ENCODE measurements at regions of chr11 and their contacts with region 1.

Region 1: GRCh38 chr11:117143871-117144476 is at the start of gene PAFAH1B2:
- DNase-seq: peak; percentile 96 to 97
- ATAC-seq: peak; percentile 96 to 98 (median 97)
- H3K4me3 ChIP-seq: peak within 1 kb of the TSS; percentile 71 to 97 (median 84)
- H3K27ac ChIP-seq: peak within 1 kb of the TSS; percentile 86 to 97 (median 94)
- H3K4me1 ChIP-seq: peaks cover 0 to 47% (median 39%) of the 10 kb centered on the region in 9 donors
- H3K27me3 ChIP-seq: no peaks in the 10 kb centered on the region
- CTCF ChIP-seq: no peak
- total RNA-seq, gene PAFAH1B2: 48.8 to 71.5 (median 64.2) TPM

Region 2: DNA sequence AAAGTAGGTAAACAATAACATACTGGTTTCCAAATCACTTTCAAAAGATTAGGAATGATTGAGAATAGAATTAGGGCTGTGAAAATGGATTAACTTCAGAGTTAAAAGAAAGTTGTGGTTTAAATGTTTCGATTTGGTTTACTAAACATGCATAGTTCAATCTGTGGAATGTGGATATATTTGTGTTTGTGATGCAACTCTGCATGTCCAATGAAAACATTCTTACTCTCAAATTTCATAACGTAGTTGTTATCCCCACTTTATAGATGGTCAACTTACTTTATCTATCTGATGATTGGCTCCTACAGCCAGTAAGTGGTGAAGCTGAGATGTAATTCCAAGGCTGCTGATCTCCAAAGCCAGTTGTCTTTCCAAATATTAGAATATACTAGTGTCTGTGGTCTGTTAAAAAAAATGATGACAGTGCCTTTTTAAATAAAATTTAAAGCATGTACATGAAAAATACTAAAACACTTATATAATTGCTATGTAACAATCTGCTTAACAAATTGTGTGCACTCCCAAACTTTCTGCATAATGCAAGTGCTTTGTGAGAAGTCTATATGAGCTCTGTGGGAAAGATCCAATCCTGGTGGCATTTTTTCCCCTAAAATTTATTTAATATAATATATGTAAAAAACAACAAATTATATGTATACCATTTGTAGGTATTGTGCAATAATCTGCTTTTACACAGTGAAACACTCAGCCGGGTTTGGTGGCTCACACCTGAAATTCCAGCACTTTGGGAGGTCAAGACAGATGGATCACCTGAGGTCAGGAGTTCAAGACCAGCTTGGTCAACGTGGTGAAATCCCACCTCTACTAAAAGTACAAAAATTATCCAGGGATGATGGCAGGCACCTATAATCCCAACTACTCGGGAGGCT is 36.0 kb before region 1 on chr11:
- intact Hi-C with region 1: loop called in 1 of 10 experiments (anchors 5 kb)
- DNase-seq: no peak
- ATAC-seq: no peak
- H3K4me3 ChIP-seq: no peak overlapping the region
- H3K27ac ChIP-seq: peak overlapping the region in 3 of 10 donors; percentile 52 to 64 (median 56)
- H3K4me1 ChIP-seq: peaks cover 0 to 6% (median 0%) of the 10 kb centered on the region in 9 donors
- H3K27me3 ChIP-seq: no peaks in the 10 kb centered on the region
- CTCF ChIP-seq: peak in 1 of 9 donors; percentile 2

Region 3: DNA sequence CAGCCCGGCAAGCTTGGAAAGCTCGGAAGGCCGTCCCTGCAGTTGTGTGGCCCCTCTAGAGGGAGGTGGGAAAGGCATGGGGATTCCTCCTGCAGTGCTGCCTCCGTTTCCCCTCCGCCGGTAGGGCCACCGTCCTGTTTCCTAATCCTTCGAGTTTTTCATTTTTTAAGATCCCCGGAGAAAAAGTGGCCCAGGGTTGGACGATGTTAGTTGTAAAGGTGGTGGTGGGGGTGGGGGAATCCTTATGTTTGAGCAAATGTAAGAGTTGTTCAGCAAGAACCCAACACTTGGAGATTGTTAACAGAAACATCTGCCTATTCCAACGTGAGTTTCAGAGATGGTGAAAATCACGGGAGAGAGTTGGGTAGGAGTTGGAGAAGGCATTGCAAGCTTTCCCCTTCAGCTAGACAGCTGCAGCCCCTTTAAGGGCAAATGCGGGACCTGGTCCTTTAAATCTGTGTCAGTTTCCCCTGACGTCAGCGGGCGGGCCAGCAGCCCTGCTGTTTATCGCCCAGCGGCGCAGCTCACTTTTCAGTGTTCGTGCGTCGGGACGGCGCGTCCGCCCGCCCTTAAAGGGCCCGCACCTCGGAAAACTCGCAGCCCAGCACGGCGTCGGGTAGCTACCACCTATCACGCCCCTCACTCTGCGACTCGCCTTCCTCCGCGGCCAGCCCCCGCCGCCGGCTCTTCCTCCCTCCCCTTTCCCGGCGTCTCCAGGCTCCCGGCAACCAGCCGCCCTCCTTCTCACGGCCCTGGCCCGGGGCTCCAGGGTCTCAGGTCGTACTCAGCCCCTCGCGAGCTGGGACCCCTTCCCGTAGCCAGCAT is 34.4 kb after region 1 on chr11 and contains the start of gene SIDT2:
- intact Hi-C with region 1: loop called in 4 of 10 experiments (anchors 2 to 5 kb)
- DNase-seq: peak; percentile 94 to 96
- ATAC-seq: peak; percentile 93 to 97 (median 96)
- H3K4me3 ChIP-seq: peak within 1 kb of the TSS; percentile 80 to 100 (median 89)
- H3K27ac ChIP-seq: peak within 1 kb of the TSS; percentile 81 to 98 (median 96)
- H3K4me1 ChIP-seq: peaks cover 14 to 41% (median 32%) of the 10 kb centered on the region in 9 donors
- H3K27me3 ChIP-seq: no peaks in the 10 kb centered on the region
- CTCF ChIP-seq: peak in 1 of 9 donors; percentile 5
- total RNA-seq, gene SIDT2: 16.2 to 33.6 (median 22.0) TPM

Region 4: GRCh38 chr11:117366248-117366647 is 222.3 kb after region 1 on chr11:
- intact Hi-C with region 1: no loop called
- DNase-seq: no peak
- ATAC-seq: no peak
- H3K4me3 ChIP-seq: no peak overlapping the region
- H3K27ac ChIP-seq: no peak overlapping the region
- H3K4me1 ChIP-seq: no peaks in the 10 kb centered on the region
- H3K27me3 ChIP-seq: no peaks in the 10 kb centered on the region
- CTCF ChIP-seq: no peak

Region 5: DNA sequence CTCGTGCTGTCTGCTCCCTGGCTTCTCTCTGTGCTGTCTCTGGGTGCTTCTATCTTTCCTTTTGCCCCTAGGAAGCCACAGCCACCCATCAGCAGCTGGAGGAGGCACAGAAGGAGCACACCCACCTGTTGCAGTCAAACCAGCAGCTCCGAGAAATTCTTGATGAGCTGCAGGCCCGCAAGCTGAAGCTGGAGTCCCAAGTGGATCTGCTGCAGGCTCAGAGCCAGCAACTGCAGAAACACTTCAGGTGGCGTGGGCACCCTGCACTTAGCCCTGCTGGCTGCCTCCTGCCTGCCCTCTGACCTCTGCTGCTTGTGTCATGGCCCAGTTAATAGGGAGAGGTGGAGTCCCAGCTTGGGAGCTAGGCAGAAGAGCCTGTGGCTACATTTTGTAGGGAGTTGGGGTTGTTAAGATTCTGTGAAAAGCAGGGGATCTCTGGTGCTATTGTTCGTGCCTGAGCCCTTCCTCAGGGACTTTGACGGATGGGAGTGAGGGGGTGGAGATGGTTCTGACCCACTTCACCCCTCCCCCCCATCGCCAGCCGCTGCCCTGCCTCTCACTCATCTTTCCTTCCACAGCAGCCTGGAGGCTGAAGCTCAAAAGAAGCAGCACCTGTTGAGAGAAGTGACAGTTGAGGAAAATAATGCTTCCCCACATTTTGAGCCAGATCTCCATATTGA is 251.6 kb after region 1 on chr11:
- intact Hi-C with region 1: no loop called
- DNase-seq: no peak
- ATAC-seq: no peak
- H3K4me3 ChIP-seq: no peak overlapping the region
- H3K27ac ChIP-seq: no peak overlapping the region
- H3K4me1 ChIP-seq: no peaks in the 10 kb centered on the region
- H3K27me3 ChIP-seq: no peaks in the 10 kb centered on the region
- CTCF ChIP-seq: no peak